ENCODE measurements at regions of chr17 and their contacts with region 1.

Region 1: DNA sequence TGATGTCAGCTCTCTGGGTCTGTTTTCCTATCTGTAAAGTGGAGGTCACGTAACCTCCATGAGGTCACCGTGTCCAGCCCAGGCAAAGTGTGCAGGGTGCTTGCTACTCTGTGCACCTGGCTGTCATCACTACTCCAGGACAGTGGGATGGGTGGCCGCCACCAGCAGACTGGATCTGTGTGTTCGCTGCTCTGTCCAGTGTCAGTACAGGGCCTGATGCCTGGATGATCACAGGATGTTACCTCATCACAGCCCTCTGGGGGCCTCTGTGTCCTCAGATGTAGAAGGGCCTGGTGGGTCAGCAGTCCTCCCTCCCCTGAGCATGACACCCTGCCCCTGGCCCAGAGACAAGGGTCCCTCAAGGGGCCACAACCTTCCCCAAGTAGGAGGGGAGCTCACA is 80.0 kb downstream of the KCNJ18 start:
- DNase-seq: peak in 1 of 2 donors; percentile 77
- H3K4me3 ChIP-seq: no peak overlapping the region
- H3K27ac ChIP-seq: no peak overlapping the region
- H3K4me1 ChIP-seq: no peaks in the 10 kb centered on the region
- H3K27me3 ChIP-seq: no peaks in the 10 kb centered on the region
- CTCF ChIP-seq: no peak
- POLR2A ChIP-seq: no peak

Region 2: GRCh38 chr17:21304091-21304490 is 468.2 kb before region 1 on chr17:
- intact Hi-C with region 1: loop called (anchors 5 kb)
- DNase-seq: no peak
- H3K4me3 ChIP-seq: no peak overlapping the region
- H3K27ac ChIP-seq: no peak overlapping the region
- H3K4me1 ChIP-seq: no peaks in the 10 kb centered on the region
- H3K27me3 ChIP-seq: no peaks in the 10 kb centered on the region
- CTCF ChIP-seq: no peak
- POLR2A ChIP-seq: no peak

Measured in vagina (tissue), 2 donors.